ENCODE measurements at regions of chr1 and their contacts with region 1.

Region 1: GRCh38 chr1:241519308-241520079 is at the start of gene FH:
- DNase-seq: peak; percentile 93 to 95
- ATAC-seq: peak; percentile 99 to 100
- H3K4me3 ChIP-seq: peak within 1 kb of the TSS; percentile 80 to 92 (median 83)
- H3K27ac ChIP-seq: peak within 1 kb of the TSS; percentile 86 to 94 (median 93)
- H3K4me1 ChIP-seq: peaks cover 14 to 19% of the 10 kb centered on the region in 2 donors
- H3K27me3 ChIP-seq: peaks cover 0 to 3% (median 0%) of the 10 kb centered on the region in 3 donors
- CTCF ChIP-seq: peak in 1 of 5 experiments; percentile 4
- POLR2A ChIP-seq: peak; percentile 76 to 92
- total RNA-seq, gene FH: 93.0 to 166 (median 112) TPM

Region 2: GRCh38 chr1:241423541-241424479 is 95.7 kb before region 1 on chr1:
- in situ Hi-C with region 1: no loop called
- intact Hi-C with region 1: no loop called
- DNase-seq: no peak
- ATAC-seq: no peak
- H3K4me3 ChIP-seq: peak overlapping the region; percentile 29 to 44 (median 35)
- H3K27ac ChIP-seq: no peak overlapping the region
- H3K4me1 ChIP-seq: no peaks in the 10 kb centered on the region
- H3K27me3 ChIP-seq: peaks cover 8 to 30% (median 21%) of the 10 kb centered on the region in 3 donors
- CTCF ChIP-seq: no peak
- POLR2A ChIP-seq: no peak

Region 3: GRCh38 chr1:241627453-241628259 is 108.2 kb after region 1 on chr1:
- in situ Hi-C with region 1: loop called in 2 of 4 experiments (anchors 10 kb)
- intact Hi-C with region 1: no loop called
- DNase-seq: no peak
- ATAC-seq: no peak
- H3K4me3 ChIP-seq: no peak overlapping the region
- H3K27ac ChIP-seq: no peak overlapping the region
- H3K4me1 ChIP-seq: peaks cover 5% of the 10 kb centered on the region in 2 donors
- H3K27me3 ChIP-seq: no peaks in the 10 kb centered on the region
- CTCF ChIP-seq: peak in 4 of 5 experiments; percentile 8 to 41 (median 29)
- POLR2A ChIP-seq: no peak

Region 4: GRCh38 chr1:241640029-241640818 is 120.7 kb after region 1 on chr1 and contains the starts of genes CHML and OPN3:
- in situ Hi-C with region 1: loop called in 1 of 4 experiments (anchors 10 kb)
- intact Hi-C with region 1: loop called (anchors 2 kb)
- DNase-seq: peak; percentile 86 to 90
- ATAC-seq: peak; percentile 92 to 94
- H3K4me3 ChIP-seq: peak within 1 kb of the TSS; percentile 83 to 91 (median 84)
- H3K27ac ChIP-seq: peak within 1 kb of the TSS; percentile 72 to 88 (median 77)
- H3K4me1 ChIP-seq: peaks cover 11 to 23% of the 10 kb centered on the region in 2 donors
- H3K27me3 ChIP-seq: no peaks in the 10 kb centered on the region
- CTCF ChIP-seq: peak in 1 of 5 experiments; percentile 10
- POLR2A ChIP-seq: peak; percentile 81 to 89
- total RNA-seq, gene CHML: 3.2 to 6.5 (median 4.8) TPM
- total RNA-seq, gene OPN3: 4.6 to 9.6 (median 5.8) TPM

Region 5: DNA sequence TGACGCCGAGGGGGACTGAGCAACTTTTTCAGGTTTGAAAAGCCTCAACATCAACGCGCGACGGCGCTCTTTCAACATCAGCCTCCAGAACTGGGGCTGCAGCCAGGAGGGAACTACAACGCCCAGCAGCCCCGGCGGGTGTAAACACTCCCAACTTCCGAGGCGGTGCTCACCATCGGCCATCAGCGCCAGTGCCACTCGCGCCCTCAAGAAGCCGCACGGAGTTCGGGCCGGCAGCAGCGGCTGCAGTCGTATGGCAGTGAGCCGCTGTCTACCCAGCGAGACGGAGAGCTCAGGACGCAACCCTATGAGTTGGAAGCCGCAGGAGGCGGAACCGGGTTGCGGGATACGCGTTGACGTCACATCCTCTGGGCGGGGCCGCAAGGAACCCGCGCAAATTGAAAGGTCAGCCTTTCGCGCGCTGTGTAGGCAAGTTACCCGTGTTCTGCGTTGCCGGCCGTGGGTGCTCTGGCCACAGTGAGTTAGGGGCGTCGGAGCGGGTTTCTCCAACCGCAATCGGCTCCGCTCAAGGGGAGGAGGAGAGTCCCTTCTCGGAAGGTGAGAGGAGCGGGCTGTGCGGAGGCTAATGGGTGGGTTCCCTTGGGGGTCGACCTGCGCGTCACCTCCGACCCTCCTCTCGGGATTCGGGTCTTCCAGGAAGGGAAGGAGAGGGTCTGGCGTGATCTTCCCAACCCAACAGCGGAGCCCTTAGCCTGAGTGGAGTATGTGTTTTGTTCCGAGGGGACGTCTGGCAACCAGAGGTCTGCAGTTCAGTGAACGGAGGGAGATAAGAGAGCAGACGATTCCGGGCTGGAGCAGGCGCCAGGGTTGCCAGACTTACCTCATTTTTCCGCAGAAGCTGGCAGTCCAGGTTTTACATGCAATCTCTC is 328.5 kb after region 1 on chr1 and contains the start of gene EXO1:
- in situ Hi-C with region 1: no loop called
- intact Hi-C with region 1: loop called (anchors 1 kb)
- DNase-seq: peak; percentile 65 to 73
- ATAC-seq: peak; percentile 97 to 98
- H3K4me3 ChIP-seq: peak within 1 kb of the TSS; percentile 86 to 99 (median 96)
- H3K27ac ChIP-seq: peak within 1 kb of the TSS; percentile 96 to 99 (median 97)
- H3K4me1 ChIP-seq: peaks cover 5 to 14% of the 10 kb centered on the region in 2 donors
- H3K27me3 ChIP-seq: no peaks in the 10 kb centered on the region
- CTCF ChIP-seq: peak in 1 of 5 experiments; percentile 10
- POLR2A ChIP-seq: no peak
- total RNA-seq, gene EXO1: 0.20 TPM in 2 of 4 donors, not detected in the others

Region 6: DNA sequence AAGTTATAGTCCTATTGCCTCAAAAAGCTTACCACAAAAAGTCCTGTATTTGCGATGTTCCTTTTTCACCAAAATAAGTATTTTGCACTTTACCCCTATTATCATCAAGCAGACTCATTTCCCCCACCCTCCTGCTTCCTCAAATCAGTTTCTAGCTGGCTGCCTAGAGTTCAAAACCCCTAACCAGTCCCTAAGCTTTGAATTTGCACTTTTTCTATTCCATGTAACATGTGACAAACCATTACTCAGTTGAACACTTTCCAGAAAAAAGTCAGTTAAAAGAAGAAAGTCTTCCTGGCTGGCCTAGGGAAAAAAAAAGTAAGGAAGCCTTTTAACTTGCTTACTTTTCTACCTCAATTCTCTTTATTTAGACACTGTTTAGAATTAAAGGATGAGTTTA is 1727.4 kb after region 1 on chr1:
- in situ Hi-C with region 1: no loop called
- intact Hi-C with region 1: loop called (anchors 10 kb)
- DNase-seq: no peak
- ATAC-seq: no peak
- H3K4me3 ChIP-seq: no peak overlapping the region
- H3K27ac ChIP-seq: peak overlapping the region; percentile 1 to 97 (median 91)
- H3K4me1 ChIP-seq: peaks cover 41 to 61% of the 10 kb centered on the region in 2 donors
- H3K27me3 ChIP-seq: no peaks in the 10 kb centered on the region
- CTCF ChIP-seq: no peak
- POLR2A ChIP-seq: no peak

Measured in gastrocnemius medialis (tissue), 4 donors.